Activated CD8-positive, alpha-beta T cell treated with anti-CD3 and anti-CD28 coated beads, Interleukin-2, amount 10 ng/mL, durations not matched to agents 7 days and 5 days (primary cell): ENCODE measurements at regions of chr14 and their contacts with region 1.

Region 1: GRCh38 chr14:59438195-59438647 is 27.0 kb downstream of the GPR135 start:
- DNase-seq: no peak
- ATAC-seq: no peak
- H3K4me3 Mint-ChIP-seq: no peak overlapping the region
- H3K27ac Mint-ChIP-seq: no peak overlapping the region
- H3K4me1 Mint-ChIP-seq: peaks cover 11% of the 10 kb centered on the region
- H3K27me3 Mint-ChIP-seq: peaks cover 2% of the 10 kb centered on the region

Region 2: DNA sequence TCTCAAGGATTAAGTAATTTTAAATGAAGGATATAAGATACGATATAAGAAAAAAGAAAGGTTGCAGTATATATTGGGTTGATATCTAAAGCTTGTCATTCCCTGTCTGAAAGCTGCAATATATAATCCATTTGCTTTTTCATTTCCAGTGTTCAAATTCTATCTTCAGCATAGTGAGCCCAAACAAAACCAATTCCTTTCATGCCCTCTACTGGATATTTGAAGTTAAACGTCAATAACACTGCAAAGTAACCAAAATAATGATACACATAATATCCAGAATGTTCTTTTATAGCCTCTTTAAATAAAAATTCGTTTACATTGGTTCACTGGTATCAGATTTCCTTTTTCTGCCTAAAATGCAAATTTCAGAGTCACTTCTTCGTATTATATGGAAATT is 314.2 kb before region 1 on chr14:
- CTCF ChIA-PET with region 1: interaction called, 26 read pairs
- POLR2A ChIA-PET with region 1: no interaction called
- DNase-seq: no peak
- ATAC-seq: no peak
- H3K4me3 Mint-ChIP-seq: no peak overlapping the region
- H3K27ac Mint-ChIP-seq: no peak overlapping the region
- H3K4me1 Mint-ChIP-seq: no peaks in the 10 kb centered on the region
- H3K27me3 Mint-ChIP-seq: peaks cover 40% of the 10 kb centered on the region

Region 3: DNA sequence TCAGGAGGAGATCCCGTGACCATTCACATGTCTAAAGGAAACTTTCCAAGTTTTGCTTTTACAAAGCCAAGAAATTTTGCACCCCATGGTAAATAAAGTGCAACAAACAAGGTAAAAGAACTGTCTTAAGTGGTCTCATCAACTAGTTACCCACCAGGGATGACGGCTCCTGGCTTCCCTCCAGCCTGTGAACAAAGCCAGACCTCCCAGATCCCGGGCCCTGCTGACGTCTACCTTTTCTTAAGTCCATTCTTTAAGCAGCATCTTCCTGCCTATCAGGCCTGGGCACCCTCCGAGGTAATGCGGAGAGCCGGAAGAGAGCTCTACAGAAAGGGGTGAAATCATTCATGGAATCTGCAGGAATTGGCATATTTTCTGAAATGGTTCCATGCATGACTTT is 307.8 kb before region 1 on chr14:
- CTCF ChIA-PET with region 1: interaction called, 26 read pairs
- POLR2A ChIA-PET with region 1: no interaction called
- DNase-seq: no peak
- ATAC-seq: no peak
- H3K4me3 Mint-ChIP-seq: no peak overlapping the region
- H3K27ac Mint-ChIP-seq: no peak overlapping the region
- H3K4me1 Mint-ChIP-seq: no peaks in the 10 kb centered on the region
- H3K27me3 Mint-ChIP-seq: peaks cover 42% of the 10 kb centered on the region